ENCODE measurements at regions of chr17 and their contacts with region 1.

Region 1: DNA sequence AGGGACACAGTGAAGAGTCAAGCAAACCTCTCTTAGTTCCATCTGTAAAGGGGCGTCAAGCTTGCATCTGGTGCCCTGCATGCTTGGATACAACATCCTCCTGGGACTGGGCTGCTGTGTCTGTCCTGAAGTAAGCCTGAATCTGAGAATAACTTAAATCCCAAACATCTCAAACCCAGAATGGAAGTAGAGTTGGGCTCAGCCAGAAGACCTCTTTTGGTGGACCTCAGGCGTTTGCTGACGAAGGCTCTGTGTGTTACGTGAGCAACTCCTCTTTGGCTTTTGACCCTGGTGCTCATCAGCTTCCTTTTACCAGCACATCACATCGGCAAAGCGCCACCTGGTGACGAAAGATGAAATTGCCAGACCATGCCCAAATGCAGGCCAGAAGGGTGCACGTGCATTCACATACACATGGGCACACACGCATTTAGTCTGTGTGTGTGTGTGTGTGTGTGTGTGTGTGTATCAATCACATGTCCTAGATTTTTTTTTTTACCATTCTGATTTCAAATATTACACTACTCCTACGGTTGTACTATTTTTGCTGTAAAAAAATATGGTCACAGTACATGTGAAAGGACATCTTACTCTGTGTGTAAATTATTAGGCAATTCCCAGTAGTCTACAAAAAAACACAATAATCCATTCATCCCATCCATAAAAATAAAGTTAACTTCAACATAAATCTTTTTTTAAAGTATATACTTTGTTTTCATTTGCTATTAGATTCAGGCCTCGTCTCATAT is 41.1 kb upstream of the FOXJ1 start:
- DNase-seq: peak; percentile 88 to 94 (median 89)
- H3K4me3 ChIP-seq: no peak overlapping the region
- H3K4me3 Mint-ChIP-seq: peak overlapping the region in 6 of 8 donors; percentile 57 to 78 (median 63)
- H3K27ac ChIP-seq: no peak overlapping the region
- H3K27ac Mint-ChIP-seq: peak overlapping the region; percentile 92 to 98 (median 96)
- H3K4me1 ChIP-seq: peaks cover 72% of the 10 kb centered on the region
- H3K4me1 Mint-ChIP-seq: peaks cover 31 to 72% (median 55%) of the 10 kb centered on the region in 4 donors
- H3K27me3 ChIP-seq: no peaks in the 10 kb centered on the region
- H3K27me3 Mint-ChIP-seq: no peaks in the 10 kb centered on the region

Region 2: GRCh38 chr17:76141212-76142038 is 40.8 kb before region 1 on chr17 and contains the start of gene FOXJ1:
- CTCF ChIA-PET with region 1: interaction called, 214 read pairs
- POLR2A ChIA-PET with region 1: interaction called, 157 read pairs
- intact Hi-C with region 1: loop called (anchors 1 kb)
- DNase-seq: peak; percentile 90 to 93 (median 92)
- H3K4me3 ChIP-seq: peak within 1 kb of the TSS; percentile 19 to 48
- H3K4me3 Mint-ChIP-seq: peak within 1 kb of the TSS; percentile 75 to 94 (median 84)
- H3K27ac ChIP-seq: no peak within 1 kb of the TSS
- H3K27ac Mint-ChIP-seq: peak within 1 kb of the TSS; percentile 78 to 96 (median 85)
- H3K4me1 ChIP-seq: peaks cover 66% of the 10 kb centered on the region
- H3K4me1 Mint-ChIP-seq: peaks cover 39 to 63% (median 50%) of the 10 kb centered on the region in 4 donors
- H3K27me3 ChIP-seq: peaks cover 4% of the 10 kb centered on the region
- H3K27me3 Mint-ChIP-seq: peaks cover 3% of the 10 kb centered on the region in 2 donors
- total RNA-seq, gene FOXJ1: 0.19 to 0.20 TPM

Region 3: DNA sequence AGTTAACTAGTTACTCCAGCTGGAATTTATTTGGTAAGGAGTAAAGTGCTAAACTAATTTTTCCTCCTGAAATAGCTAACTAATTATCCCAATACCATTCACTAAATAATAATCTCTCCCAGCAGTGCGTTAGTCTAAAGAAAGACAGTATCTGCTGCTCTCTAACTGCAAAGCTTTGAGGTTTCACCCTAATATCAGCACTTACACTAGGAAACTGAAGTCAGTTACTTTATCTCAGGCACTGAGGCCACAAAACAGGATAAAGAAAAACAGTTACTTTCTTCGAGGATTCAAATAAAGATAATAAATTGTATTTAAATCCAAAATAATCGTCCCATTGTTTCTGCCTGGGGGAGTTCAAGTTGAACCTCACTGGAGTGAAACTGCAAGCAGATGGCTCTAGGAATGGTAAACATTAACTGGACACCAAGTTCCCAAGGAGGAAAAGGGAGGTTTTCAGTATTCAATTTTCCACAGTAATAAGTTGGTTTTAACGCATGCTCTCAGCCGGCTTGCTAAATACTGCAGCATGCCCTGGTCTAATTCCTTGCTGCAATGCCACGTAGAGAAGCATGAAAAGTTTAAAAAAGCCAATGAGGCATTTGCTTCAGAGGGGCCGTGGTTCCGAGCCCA is 21.2 kb before region 1 on chr17:
- CTCF ChIA-PET with region 1: interaction called, 214 read pairs
- POLR2A ChIA-PET with region 1: interaction called, 91 read pairs
- intact Hi-C with region 1: no loop called
- DNase-seq: no peak
- H3K4me3 ChIP-seq: no peak overlapping the region
- H3K4me3 Mint-ChIP-seq: no peak overlapping the region
- H3K27ac ChIP-seq: no peak overlapping the region
- H3K27ac Mint-ChIP-seq: peak overlapping the region in 1 of 7 donors; percentile 36
- H3K4me1 ChIP-seq: no peaks in the 10 kb centered on the region
- H3K4me1 Mint-ChIP-seq: peaks cover 0 to 4% (median 0%) of the 10 kb centered on the region in 4 donors
- H3K27me3 ChIP-seq: no peaks in the 10 kb centered on the region
- H3K27me3 Mint-ChIP-seq: no peaks in the 10 kb centered on the region

Region 4: GRCh38 chr17:76217081-76217480 is 34.9 kb after region 1 on chr17:
- CTCF ChIA-PET with region 1: interaction called, 15 read pairs
- POLR2A ChIA-PET with region 1: interaction called, 5 read pairs
- intact Hi-C with region 1: no loop called
- DNase-seq: no peak
- H3K4me3 ChIP-seq: no peak overlapping the region
- H3K4me3 Mint-ChIP-seq: no peak overlapping the region
- H3K27ac ChIP-seq: no peak overlapping the region
- H3K27ac Mint-ChIP-seq: no peak overlapping the region
- H3K4me1 ChIP-seq: peaks cover 9% of the 10 kb centered on the region
- H3K4me1 Mint-ChIP-seq: peaks cover 20 to 34% (median 27%) of the 10 kb centered on the region in 4 donors
- H3K27me3 ChIP-seq: no peaks in the 10 kb centered on the region
- H3K27me3 Mint-ChIP-seq: no peaks in the 10 kb centered on the region

Region 5: DNA sequence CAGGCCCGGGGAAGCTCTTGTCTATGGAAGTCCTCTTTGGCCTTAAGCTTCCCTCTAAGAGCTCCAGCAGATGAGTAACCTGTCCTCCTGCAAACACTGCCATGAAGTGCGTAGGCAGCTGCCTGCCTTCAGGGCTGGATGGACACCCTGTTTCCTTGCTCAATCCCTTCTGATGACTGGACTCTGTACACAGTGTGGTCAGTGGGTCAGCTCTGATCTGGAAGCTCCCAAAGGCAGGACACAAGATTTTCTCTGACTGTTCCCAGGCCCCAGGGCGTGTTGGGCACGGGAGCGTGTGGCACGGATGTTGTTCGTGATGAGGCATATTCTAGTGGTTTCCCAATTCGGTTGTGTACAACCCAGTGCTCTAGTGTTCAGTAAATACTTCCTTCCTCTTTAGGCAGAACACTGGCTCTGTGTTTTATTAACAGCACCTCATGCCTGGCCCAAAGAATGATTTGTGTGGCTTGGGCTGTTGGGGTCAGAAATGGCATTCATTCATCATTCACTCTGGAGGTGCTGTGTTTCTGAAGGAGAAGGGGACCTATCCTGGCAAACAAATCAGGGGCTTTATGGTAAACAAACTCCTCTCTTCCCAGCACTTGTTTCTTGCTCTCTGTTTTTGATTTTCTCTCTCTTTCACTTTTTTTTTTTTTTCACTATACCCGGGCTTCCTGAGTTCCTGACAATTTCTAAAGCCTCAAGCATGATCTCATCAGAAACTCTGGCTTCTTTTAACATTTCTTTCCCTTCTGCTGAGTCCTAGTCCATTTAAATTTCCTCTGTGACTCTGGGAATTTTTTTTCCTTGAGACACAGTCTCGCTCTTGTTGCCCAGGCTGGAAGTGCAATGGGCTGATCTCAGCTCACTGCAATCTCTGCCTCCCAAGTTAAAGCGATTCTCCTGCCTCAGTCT is 70.1 kb after region 1 on chr17:
- CTCF ChIA-PET with region 1: interaction called, 11 read pairs
- POLR2A ChIA-PET with region 1: interaction called, 21 read pairs
- intact Hi-C with region 1: no loop called
- DNase-seq: peak in 3 of 5 donors; percentile 55 to 57 (median 55)
- H3K4me3 ChIP-seq: peak overlapping the region; percentile 3 to 5
- H3K4me3 Mint-ChIP-seq: peak overlapping the region; percentile 69 to 89 (median 81)
- H3K27ac ChIP-seq: peak overlapping the region; percentile 51
- H3K27ac Mint-ChIP-seq: peak overlapping the region; percentile 82 to 97 (median 96)
- H3K4me1 ChIP-seq: peaks cover 68% of the 10 kb centered on the region
- H3K4me1 Mint-ChIP-seq: peaks cover 31 to 71% (median 53%) of the 10 kb centered on the region in 4 donors
- H3K27me3 ChIP-seq: no peaks in the 10 kb centered on the region
- H3K27me3 Mint-ChIP-seq: no peaks in the 10 kb centered on the region